Activated T-helper 2 cell treated with anti-CD3 and anti-CD28 coated beads, Interferon-gamma antibody, Interleukin-2, Interleukin-4, amounts not matched to agents 10 μg/mL and 5 μg/mL and 100 μg/mL, durations not matched to agents 14 hours and 24 hours and 36 hours (primary cell): ENCODE measurements at regions of chr19 and their contacts with region 1.

Region 1: GRCh38 chr19:21851596-21852345 is 15.8 kb upstream of the ZNF43 start:
- DNase-seq: peak; percentile 83
- H3K4me3 Mint-ChIP-seq: peak overlapping the region; percentile 85
- H3K27ac Mint-ChIP-seq: peak overlapping the region; percentile 75
- H3K4me1 Mint-ChIP-seq: peaks cover 14% of the 10 kb centered on the region
- H3K27me3 Mint-ChIP-seq: no peaks in the 10 kb centered on the region

Region 2: DNA sequence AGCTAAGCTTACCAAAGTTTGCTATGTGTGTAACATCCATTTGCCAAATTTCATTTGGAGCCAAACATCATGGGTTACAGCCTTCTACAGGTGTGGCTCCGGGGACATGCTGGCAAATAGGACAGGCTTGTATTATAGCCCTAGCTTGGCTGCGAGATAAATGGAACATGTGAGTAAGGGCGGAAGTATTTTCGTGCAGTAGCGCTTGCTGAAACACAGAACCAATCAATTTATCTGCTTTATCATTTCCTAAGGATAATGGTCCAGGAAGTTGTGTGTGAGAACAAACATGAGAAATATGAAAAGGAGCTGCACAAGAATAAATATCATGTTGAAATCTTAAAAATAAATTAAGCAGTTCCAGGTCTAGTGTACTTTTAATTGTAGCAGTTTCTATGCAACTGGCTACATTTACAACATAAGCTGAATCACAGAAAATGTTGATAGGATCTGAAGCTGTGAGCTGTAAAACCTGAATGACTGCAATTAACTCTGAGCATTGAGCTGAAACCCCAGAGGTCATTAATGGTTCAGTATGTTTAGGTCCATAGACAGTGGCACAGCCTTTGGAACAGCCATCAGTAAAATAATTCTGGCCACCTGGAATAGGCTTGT is 62.2 kb before region 1 on chr19:
- intact Hi-C with region 1: no loop called
- DNase-seq: no peak
- H3K4me3 Mint-ChIP-seq: no peak overlapping the region
- H3K27ac Mint-ChIP-seq: no peak overlapping the region
- H3K4me1 Mint-ChIP-seq: no peaks in the 10 kb centered on the region
- H3K27me3 Mint-ChIP-seq: no peaks in the 10 kb centered on the region

Region 3: GRCh38 chr19:21835810-21836444 is 15.8 kb before region 1 on chr19 and contains the start of gene ZNF43:
- intact Hi-C with region 1: loop called (anchors 1 kb)
- DNase-seq: peak; percentile 89
- H3K4me3 Mint-ChIP-seq: peak within 1 kb of the TSS; percentile 94
- H3K27ac Mint-ChIP-seq: peak within 1 kb of the TSS; percentile 98
- H3K4me1 Mint-ChIP-seq: peaks cover 11% of the 10 kb centered on the region
- H3K27me3 Mint-ChIP-seq: no peaks in the 10 kb centered on the region
- total RNA-seq, gene ZNF43: 33.5 and 34.9 TPM in 2 replicates